Naive thymus-derived CD4-positive, alpha-beta T cell (primary cell): ENCODE measurements at regions of chr6 and their contacts with region 1.

Region 1: GRCh38 chr6:149324428-149324827 is 6.9 kb downstream of the TAB2 start:
- DNase-seq: no peak
- ATAC-seq: no peak
- H3K4me3 ChIP-seq: no peak overlapping the region
- H3K4me3 Mint-ChIP-seq: peak overlapping the region in 7 of 10 donors; percentile 21 to 81 (median 50)
- H3K27ac ChIP-seq: no peak overlapping the region
- H3K27ac Mint-ChIP-seq: peak overlapping the region in 3 of 9 donors; percentile 48 to 84 (median 76)
- H3K4me1 ChIP-seq: peaks cover 45 to 60% of the 10 kb centered on the region in 2 donors
- H3K4me1 Mint-ChIP-seq: peaks cover 47 to 95% (median 94%) of the 10 kb centered on the region in 7 donors
- H3K27me3 ChIP-seq: no peaks in the 10 kb centered on the region
- H3K27me3 Mint-ChIP-seq: no peaks in the 10 kb centered on the region

Region 2: GRCh38 chr6:149176971-149177667 is 147.3 kb before region 1 on chr6:
- CTCF ChIA-PET with region 1: no interaction called
- POLR2A ChIA-PET with region 1: no interaction called
- intact Hi-C with region 1: no loop called
- DNase-seq: no peak
- ATAC-seq: no peak
- H3K4me3 ChIP-seq: no peak overlapping the region
- H3K4me3 Mint-ChIP-seq: no peak overlapping the region
- H3K27ac ChIP-seq: no peak overlapping the region
- H3K27ac Mint-ChIP-seq: no peak overlapping the region
- H3K4me1 ChIP-seq: no peaks in the 10 kb centered on the region
- H3K4me1 Mint-ChIP-seq: peaks cover 0 to 32% (median 8%) of the 10 kb centered on the region in 7 donors
- H3K27me3 ChIP-seq: no peaks in the 10 kb centered on the region
- H3K27me3 Mint-ChIP-seq: no peaks in the 10 kb centered on the region

Region 3: DNA sequence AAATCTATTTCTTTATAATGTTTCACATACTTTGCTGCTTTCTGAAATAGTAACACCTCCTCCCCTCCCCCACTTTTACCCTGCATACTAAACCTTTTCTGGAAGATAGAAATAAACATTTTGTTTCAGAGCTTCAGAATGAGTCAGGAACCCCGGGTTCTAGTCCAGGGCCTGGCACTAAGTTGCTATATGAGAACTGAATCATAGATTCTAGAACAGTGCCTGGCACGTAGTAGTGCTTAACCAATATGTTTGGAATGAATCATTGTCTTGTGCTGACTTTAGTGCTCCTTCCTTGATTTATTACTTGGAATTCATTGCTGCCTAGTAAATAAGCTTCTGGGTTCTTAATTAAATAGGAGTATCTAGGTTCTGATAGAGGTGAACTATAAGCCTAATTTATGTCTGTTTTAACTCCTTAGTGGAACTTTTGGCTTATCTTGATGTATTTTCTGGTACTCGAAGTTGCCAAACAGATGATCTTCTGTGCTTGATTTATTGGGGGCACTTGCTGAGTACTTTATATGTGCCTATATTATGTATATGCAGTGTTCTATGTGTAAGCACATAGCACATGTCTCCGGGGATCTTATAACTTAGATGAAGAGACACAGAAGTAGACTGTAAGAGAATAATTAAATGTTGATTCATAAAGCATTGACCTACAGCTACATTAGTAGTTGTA is 11.6 kb after region 1 on chr6:
- CTCF ChIA-PET with region 1: interaction called, 5 read pairs
- POLR2A ChIA-PET with region 1: interaction called, 7 read pairs
- intact Hi-C with region 1: loop called (anchors 1 to 2 kb)
- DNase-seq: no peak
- ATAC-seq: peak; percentile 61
- H3K4me3 ChIP-seq: no peak overlapping the region
- H3K4me3 Mint-ChIP-seq: peak overlapping the region in 9 of 10 donors; percentile 0 to 73 (median 50)
- H3K27ac ChIP-seq: no peak overlapping the region
- H3K27ac Mint-ChIP-seq: peak overlapping the region in 8 of 9 donors; percentile 6 to 82 (median 23)
- H3K4me1 ChIP-seq: peaks cover 40 to 44% of the 10 kb centered on the region in 2 donors
- H3K4me1 Mint-ChIP-seq: peaks cover 67 to 100% (median 88%) of the 10 kb centered on the region in 7 donors
- H3K27me3 ChIP-seq: no peaks in the 10 kb centered on the region
- H3K27me3 Mint-ChIP-seq: no peaks in the 10 kb centered on the region

Region 4: DNA sequence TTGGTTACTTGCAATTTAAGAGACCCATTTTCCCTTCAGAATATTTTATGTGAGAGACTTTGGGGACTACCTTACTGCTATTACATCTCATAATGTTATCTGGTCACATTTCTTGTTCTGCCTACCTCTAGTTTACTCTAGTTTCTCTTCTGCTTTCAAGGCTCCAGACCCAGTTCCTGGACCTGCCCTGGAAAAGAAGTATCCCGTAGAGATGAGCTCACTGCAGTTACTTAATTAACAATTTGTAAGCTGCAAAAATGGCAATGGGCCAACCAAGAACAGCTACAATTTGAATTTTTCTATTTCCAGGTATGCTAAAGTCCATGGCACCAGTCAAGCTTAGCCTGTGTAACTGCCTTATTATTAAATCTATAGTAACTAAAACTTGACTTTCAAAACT is 18.1 kb after region 1 on chr6:
- CTCF ChIA-PET with region 1: interaction called, 5 read pairs
- POLR2A ChIA-PET with region 1: interaction called, 3 read pairs
- intact Hi-C with region 1: loop called (anchors 1 to 2 kb)
- DNase-seq: no peak
- ATAC-seq: peak; percentile 37
- H3K4me3 ChIP-seq: no peak overlapping the region
- H3K4me3 Mint-ChIP-seq: peak overlapping the region in 7 of 10 donors; percentile 4 to 69 (median 35)
- H3K27ac ChIP-seq: no peak overlapping the region
- H3K27ac Mint-ChIP-seq: peak overlapping the region in 7 of 9 donors; percentile 58 to 80 (median 71)
- H3K4me1 ChIP-seq: peaks cover 24 to 30% of the 10 kb centered on the region in 2 donors
- H3K4me1 Mint-ChIP-seq: peaks cover 47 to 94% (median 86%) of the 10 kb centered on the region in 7 donors
- H3K27me3 ChIP-seq: no peaks in the 10 kb centered on the region
- H3K27me3 Mint-ChIP-seq: no peaks in the 10 kb centered on the region

Region 5: DNA sequence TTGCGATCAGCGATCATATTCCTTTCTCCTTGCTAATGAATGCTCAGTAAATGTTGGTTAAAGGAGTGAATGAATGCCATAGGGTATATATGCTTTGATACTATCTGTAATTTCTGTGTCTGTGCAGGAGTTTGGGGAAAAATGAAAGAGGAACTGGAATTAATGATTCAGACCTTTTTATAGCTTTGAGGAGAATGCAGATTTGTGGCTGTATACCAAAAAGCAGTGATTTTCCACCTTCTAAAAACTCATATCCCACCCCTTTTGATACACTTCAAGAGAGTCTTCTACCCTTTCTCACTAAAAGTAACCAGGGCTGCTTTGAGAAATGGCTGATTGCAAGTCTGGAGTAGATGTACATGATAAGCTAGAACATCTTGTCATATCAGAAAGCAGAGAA is 49.1 kb after region 1 on chr6:
- CTCF ChIA-PET with region 1: no interaction called
- POLR2A ChIA-PET with region 1: interaction called, 3 read pairs
- intact Hi-C with region 1: loop called in 1 of 2 experiments (anchors 10 kb)
- DNase-seq: no peak
- ATAC-seq: no peak
- H3K4me3 ChIP-seq: no peak overlapping the region
- H3K4me3 Mint-ChIP-seq: peak overlapping the region in 5 of 10 donors; percentile 1 to 26 (median 8)
- H3K27ac ChIP-seq: no peak overlapping the region
- H3K27ac Mint-ChIP-seq: peak overlapping the region in 7 of 9 donors; percentile 0 to 81 (median 44)
- H3K4me1 ChIP-seq: peaks cover 7 to 30% of the 10 kb centered on the region in 2 donors
- H3K4me1 Mint-ChIP-seq: peaks cover 37 to 67% (median 65%) of the 10 kb centered on the region in 7 donors
- H3K27me3 ChIP-seq: no peaks in the 10 kb centered on the region
- H3K27me3 Mint-ChIP-seq: no peaks in the 10 kb centered on the region